ENCODE measurements at regions of chr4 and their contacts with region 1.

Region 1: DNA sequence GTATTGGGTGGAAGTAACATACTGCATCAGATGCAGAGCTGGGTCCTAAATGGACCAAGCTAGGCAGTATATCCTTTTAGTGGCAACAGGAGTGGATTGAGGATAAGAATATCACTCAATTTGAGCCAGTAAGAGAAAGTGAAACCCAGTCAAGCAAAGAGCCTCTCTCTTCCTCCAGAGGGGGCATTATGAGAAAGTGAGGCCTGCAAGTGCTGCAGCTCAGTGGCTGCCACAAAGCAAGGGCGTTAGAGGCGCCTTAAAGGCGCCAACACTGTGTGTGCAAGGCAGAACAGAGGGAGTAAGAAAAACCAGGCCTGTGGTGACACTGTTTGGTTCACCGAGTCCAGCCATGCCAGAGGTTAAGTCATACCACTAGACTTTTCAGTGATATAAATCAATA is 17.5 kb downstream of the STX18 start:
- DNase-seq: no peak
- H3K4me3 Mint-ChIP-seq: no peak overlapping the region
- H3K27ac Mint-ChIP-seq: no peak overlapping the region
- H3K4me1 Mint-ChIP-seq: no peaks in the 10 kb centered on the region
- H3K27me3 Mint-ChIP-seq: no peaks in the 10 kb centered on the region
- CTCF ChIP-seq: no peak

Region 2: GRCh38 chr4:4507923-4508322 is 16.4 kb before region 1 on chr4:
- CTCF ChIA-PET with region 1: interaction called, 15 read pairs
- POLR2A ChIA-PET with region 1: no interaction called
- intact Hi-C with region 1: no loop called
- DNase-seq: peak; percentile 18
- H3K4me3 Mint-ChIP-seq: no peak overlapping the region
- H3K27ac Mint-ChIP-seq: no peak overlapping the region
- H3K4me1 Mint-ChIP-seq: no peaks in the 10 kb centered on the region
- H3K27me3 Mint-ChIP-seq: no peaks in the 10 kb centered on the region
- CTCF ChIP-seq: peak; percentile 35

Region 3: DNA sequence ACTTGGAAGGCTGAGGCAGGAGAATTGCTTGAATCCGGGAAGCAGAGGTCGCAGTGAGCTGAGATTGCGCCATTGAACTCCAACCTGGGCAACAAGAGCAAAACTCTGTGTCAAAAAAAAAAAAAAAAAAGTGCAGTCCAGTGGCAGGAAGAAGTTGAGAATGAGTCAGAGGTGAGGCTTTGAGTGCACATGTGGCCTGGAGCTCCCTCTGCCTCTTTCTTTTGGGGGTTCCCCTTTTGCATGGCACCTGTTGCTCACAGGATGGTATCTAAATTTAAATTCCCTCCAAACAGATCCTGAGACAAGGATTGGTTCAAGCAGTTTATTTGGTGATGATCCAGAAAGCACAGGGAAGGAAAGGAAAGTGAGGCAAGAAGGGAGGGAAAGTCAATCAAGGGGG is 168.9 kb after region 1 on chr4:
- CTCF ChIA-PET with region 1: interaction called, 3 read pairs
- POLR2A ChIA-PET with region 1: interaction called, 3 read pairs
- intact Hi-C with region 1: loop called (anchors 1 kb)
- DNase-seq: peak; percentile 81
- H3K4me3 Mint-ChIP-seq: no peak overlapping the region
- H3K27ac Mint-ChIP-seq: no peak overlapping the region
- H3K4me1 Mint-ChIP-seq: peaks cover 10% of the 10 kb centered on the region
- H3K27me3 Mint-ChIP-seq: no peaks in the 10 kb centered on the region
- CTCF ChIP-seq: peak; percentile 17

Region 4: DNA sequence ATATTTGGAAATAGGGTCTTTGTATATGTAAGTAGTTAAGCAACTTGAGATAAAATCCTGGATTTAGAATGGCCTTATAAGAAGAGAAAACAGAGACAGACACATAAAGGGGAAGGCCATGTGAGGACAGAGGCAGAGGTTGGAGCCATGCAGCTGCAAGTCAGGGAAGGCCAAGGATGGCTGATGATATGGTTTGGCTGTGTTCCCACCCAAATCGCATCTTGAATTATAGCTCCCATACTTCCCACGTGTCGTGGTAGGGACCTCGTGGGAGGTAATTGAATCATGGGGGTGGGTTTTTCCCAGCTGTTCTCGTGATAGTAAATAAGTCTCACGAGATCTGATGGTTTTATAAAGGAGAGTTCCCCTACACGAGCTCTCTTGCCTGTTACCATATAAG is 603.2 kb after region 1 on chr4:
- CTCF ChIA-PET with region 1: no interaction called
- POLR2A ChIA-PET with region 1: no interaction called
- intact Hi-C with region 1: no loop called
- DNase-seq: no peak
- H3K4me3 Mint-ChIP-seq: no peak overlapping the region
- H3K27ac Mint-ChIP-seq: no peak overlapping the region
- H3K4me1 Mint-ChIP-seq: no peaks in the 10 kb centered on the region
- H3K27me3 Mint-ChIP-seq: peaks cover 35% of the 10 kb centered on the region
- CTCF ChIP-seq: no peak